Caco-2 (cell line): ENCODE measurements at regions of chr16 and their contacts with region 1.

Region 1: DNA sequence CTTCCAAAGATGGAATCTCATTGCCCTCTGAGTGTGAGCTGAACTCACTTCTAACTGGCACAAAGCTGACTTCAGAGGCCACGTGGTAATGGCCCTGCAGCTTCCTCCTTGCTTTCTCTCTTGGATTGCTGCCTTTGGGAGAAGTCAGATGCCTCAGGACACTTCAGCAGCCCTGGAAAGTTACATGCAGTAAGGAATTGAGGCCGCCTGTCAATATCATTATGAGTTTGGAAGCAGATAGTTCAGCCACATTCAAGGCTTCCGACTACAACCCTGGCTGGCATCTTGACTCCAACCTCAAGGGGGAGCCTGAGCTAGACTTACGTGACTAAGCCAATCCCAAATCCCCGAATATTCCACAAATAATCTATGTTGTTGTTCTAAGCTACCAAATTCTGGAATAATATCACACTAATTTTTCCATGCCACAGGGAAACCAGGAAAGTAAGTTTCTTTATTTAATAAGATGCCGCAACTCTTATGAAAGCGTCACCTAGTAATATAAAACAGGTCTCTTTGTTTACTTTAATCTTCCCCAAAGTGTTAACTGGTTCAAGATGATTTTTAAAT is 13.6 kb downstream of the CEP20 start:
- DNase-seq: peak; percentile 56 to 61
- H3K4me3 ChIP-seq: no peak overlapping the region
- H3K4me3 Mint-ChIP-seq: no peak overlapping the region
- H3K27ac Mint-ChIP-seq: no peak overlapping the region
- H3K4me1 ChIP-seq: no peaks in the 10 kb centered on the region; the same call in 1 of the 2 replicates
- H3K4me1 Mint-ChIP-seq: no peaks in the 10 kb centered on the region
- H3K27me3 ChIP-seq: no peaks in the 10 kb centered on the region
- H3K27me3 Mint-ChIP-seq: no peaks in the 10 kb centered on the region
- CTCF ChIP-seq: peak; percentile 72 to 75

Region 2: DNA sequence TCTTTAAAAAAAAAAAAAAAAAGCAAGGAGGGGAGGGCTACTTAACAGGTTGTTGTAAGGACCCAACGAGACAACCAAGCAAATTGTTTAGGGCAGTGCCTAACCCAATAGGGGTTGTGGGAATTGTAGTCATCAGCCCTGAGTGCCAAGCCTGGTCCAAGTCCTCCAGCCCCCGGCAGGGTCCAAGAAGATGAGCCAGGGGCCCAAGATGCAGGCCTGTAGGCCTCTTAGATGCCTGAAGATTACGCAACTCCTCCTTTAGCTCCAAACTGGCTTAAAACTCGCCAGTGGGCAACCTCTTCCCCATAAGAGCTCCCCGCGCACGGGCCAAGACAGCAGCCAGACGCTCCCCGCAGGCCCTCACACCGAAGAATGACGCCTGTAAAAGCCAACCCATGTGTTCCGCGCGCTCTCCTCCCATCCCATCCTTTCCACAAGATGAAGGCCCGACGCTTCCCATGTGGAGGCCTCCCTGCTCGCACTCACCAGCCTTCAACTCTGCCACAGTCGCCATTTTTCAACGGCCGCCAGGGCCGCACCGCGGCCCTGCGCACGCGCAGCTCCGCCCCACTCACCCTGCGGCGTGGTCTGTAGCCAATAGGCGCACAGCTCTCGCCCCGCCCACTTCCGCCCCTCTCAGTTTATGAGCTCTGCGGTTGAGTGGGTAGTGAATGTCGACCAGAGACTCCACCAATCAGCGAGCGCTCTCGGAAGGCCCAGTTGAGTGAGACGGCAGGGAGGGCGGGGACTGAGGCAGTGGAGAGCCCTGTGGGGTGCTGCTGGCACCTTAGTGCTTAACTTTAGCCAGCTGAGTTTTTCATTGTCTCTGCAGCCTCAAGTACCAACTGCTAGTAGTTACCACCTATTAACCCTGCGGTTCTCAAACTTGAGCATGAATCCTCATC is 13.5 kb after region 1 on chr16 and contains the start of gene CEP20:
- CTCF ChIA-PET with region 1: interaction called, 13 read pairs
- POLR2A ChIA-PET with region 1: interaction called, 10 read pairs
- intact Hi-C with region 1: no loop called
- DNase-seq: peak; percentile 98 to 99
- H3K4me3 ChIP-seq: peak within 1 kb of the TSS; percentile 87
- H3K4me3 Mint-ChIP-seq: peak within 1 kb of the TSS; percentile 93
- H3K27ac Mint-ChIP-seq: peak within 1 kb of the TSS; percentile 95
- H3K4me1 ChIP-seq: peaks cover 4% of the 10 kb centered on the region; the same call in 1 of the 2 replicates
- H3K4me1 Mint-ChIP-seq: peaks cover 6% of the 10 kb centered on the region
- H3K27me3 ChIP-seq: no peaks in the 10 kb centered on the region
- H3K27me3 Mint-ChIP-seq: no peaks in the 10 kb centered on the region
- CTCF ChIP-seq: no peak
- total RNA-seq, gene CEP20: 26.0 and 30.2 TPM in 2 replicates

Region 3: DNA sequence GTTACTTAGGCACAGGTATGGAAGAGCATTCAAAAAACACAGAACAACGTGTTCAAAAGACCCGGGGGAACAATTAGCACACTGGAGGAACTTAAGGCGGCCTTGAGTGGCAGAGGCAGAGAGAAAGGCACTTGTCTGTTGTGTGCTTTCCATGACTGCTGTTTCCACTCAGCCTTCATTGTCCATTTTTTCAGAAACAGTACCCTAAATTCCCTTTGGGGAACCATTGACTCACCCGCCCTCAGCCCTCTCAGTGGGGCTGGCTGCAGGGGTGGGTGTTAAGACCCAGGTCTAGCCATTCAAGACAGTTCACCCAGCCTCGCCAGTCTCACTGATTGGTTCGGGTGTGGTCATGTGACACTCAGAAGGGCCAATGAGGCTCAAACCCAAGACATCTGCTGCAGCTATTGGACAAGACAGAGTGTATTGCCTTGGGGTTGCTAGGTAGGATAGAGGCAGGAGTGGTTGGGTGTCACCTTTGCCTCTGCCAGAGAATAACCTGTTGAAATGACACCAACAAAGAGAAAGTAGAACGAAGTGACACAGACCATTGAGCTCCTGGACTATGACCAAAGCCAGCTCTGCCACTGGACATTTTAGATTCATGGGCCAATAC is 33.1 kb after region 1 on chr16:
- CTCF ChIA-PET with region 1: interaction called, 13 read pairs
- POLR2A ChIA-PET with region 1: no interaction called
- intact Hi-C with region 1: no loop called
- DNase-seq: peak; percentile 49 to 76
- H3K4me3 ChIP-seq: no peak overlapping the region
- H3K4me3 Mint-ChIP-seq: no peak overlapping the region
- H3K27ac Mint-ChIP-seq: no peak overlapping the region
- H3K4me1 ChIP-seq: no peaks in the 10 kb centered on the region
- H3K4me1 Mint-ChIP-seq: no peaks in the 10 kb centered on the region
- H3K27me3 ChIP-seq: no peaks in the 10 kb centered on the region
- H3K27me3 Mint-ChIP-seq: no peaks in the 10 kb centered on the region
- CTCF ChIP-seq: no peak

Region 4: DNA sequence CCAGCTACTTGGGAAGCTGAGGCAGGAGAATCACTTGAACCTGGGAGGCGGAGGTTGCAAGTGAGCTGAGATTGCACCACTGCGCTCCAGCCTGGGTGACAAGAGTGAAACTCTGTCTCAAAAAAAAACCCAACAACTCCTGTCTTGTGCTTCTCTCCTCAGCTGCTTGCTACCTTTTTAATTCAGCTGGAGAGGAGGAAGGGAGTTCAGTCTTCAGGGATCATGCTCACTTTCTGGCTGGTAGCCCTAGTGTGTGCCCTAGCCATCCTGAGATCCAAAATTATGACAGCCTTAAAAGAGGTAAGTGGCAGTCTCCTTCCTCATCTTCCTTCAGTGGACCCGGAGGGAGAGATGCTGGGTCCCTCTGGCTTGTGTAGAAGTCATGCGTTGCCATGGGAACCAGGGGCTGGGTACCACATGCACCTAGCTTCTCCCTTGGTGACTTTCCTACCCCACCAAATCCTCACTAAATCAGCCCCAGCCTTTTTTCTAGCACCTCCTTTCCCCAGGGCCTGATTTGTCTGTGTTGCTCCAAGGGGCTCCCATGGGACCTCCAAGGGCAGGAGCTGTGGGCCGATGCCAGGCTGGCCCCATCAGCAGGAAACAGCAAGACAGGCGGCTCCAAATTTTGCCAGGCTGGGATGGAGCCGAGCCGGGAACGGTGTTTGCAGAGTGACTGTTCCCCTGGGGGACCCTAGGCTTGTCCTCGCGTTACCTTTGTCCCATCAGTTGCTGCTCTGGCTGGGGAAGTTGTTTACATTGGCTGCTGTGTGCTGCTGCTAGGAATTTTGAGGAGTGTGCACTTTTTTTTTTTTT is 139.7 kb after region 1 on chr16:
- CTCF ChIA-PET with region 1: no interaction called
- POLR2A ChIA-PET with region 1: no interaction called
- intact Hi-C with region 1: loop called (anchors 10 kb)
- DNase-seq: peak; percentile 58 to 64
- H3K4me3 ChIP-seq: no peak overlapping the region
- H3K4me3 Mint-ChIP-seq: no peak overlapping the region
- H3K27ac Mint-ChIP-seq: peak overlapping the region; percentile 70
- H3K4me1 ChIP-seq: no peaks in the 10 kb centered on the region; the same call in 1 of the 2 replicates
- H3K4me1 Mint-ChIP-seq: no peaks in the 10 kb centered on the region
- H3K27me3 ChIP-seq: no peaks in the 10 kb centered on the region
- H3K27me3 Mint-ChIP-seq: no peaks in the 10 kb centered on the region
- CTCF ChIP-seq: no peak